ENCODE measurements at regions of chr17 and their contacts with region 1.

Region 1: DNA sequence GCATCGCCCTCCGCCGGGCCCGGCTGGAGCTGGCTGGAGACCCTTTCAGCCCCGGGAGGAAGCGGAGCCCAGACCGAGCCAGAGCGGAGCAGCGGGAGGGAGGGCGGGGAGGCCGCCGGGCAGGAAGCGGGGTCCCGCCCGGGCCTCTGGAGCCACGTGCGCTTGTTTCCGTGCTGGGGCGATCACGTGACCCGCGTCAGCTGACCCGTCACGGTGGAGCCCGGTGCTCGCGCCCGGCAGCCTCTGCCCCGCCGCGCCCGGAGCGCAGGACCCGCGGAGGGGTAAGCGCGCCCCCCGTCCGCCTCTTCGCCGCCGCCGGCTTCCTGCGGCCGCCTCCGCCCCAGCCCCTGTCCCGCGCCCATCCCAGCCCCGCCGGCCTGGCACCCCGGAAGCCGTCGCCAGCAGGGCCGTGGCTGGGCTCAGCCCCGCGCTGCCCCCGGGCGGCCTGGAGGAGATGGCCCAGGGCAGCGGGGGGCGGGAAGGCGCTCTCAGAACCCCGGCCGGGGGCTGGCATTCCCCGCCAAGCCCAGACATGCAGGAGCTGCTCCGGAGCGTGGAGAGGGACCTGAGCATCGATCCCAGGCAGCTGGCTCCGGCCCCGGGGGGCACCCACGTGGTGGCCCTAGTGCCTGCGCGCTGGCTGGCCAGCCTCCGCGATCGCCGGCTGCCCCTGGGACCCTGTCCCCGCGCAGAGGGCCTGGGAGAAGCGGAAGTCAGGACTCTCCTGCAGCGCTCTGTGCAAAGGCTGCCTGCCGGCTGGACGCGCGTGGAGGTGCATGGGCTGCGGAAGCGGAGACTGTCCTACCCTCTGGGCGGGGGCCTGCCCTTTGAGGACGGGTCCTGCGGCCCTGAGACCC is at the start of gene WDR81:
- DNase-seq: peak; percentile 95
- CTCF ChIP-seq: peak; percentile 29

Region 2: GRCh38 chr17:1783834-1784611 is 59.3 kb after region 1 on chr17:
- CTCF ChIA-PET with region 1: interaction called, 40 read pairs
- POLR2A ChIA-PET with region 1: interaction called, 3 read pairs
- DNase-seq: peak; percentile 53
- CTCF ChIP-seq: peak; percentile 35

Region 3: GRCh38 chr17:1865252-1866037 is 140.7 kb after region 1 on chr17:
- CTCF ChIA-PET with region 1: interaction called, 16 read pairs
- POLR2A ChIA-PET with region 1: no interaction called
- DNase-seq: peak; percentile 59
- CTCF ChIP-seq: peak; percentile 42

Region 4: GRCh38 chr17:2041561-2042366 is 317.0 kb after region 1 on chr17 and contains the start of gene OVCA2:
- CTCF ChIA-PET with region 1: interaction called, 11 read pairs
- POLR2A ChIA-PET with region 1: no interaction called
- DNase-seq: peak; percentile 98
- CTCF ChIP-seq: peak; percentile 68